Dorsolateral prefrontal cortex (tissue), 120 donors: ENCODE measurements at regions of chr18 and their contacts with region 1.

Region 1: DNA sequence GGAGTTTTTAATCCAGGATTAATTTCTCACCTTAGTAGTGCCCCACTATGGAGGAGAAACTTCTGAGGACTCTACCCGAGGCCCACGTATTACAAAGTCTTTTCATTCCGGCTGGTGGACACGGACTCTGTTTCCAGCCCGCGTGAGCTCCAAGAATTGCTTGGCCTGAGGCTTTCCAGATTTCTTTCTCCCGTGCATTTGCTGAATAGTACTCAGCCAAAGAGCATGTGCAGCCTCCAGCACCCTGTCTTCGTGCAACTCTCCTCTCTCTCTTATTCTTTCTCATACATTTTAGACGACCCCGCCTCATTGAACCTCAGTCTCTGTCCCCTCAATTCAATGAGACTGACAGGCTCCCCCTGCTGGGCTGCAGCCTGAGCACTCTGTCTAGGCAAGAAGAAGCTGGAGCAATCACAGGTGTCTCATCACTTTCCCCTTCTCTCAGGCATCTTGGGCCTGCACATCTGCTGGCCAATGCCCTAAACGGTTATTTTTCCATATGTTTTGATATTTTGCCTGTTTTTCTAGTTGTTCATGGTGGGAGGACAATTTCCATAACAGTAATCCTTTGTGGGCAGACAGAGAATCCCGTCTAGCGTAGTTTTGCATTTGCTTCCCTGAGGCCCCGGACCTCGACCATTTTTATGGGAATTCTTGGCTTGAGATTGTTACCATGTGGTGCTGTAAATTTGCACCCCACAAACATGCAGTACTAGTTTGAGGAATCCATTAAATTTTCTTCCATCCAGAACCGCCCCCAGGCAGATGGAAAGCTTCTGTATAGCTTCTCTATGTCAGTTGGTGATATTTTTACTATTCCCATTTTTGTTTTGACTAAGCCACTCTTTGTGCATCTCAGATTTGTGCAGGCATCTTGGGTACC is 50.1 kb upstream of the LPIN2 start:
- DNase-seq: peak; percentile 39 to 74 (median 68)
- H3K4me3 ChIP-seq: peak overlapping the region in 42 of 59 donors; percentile 1 to 55 (median 35)
- H3K27ac ChIP-seq: peak overlapping the region in 6 of 59 donors; percentile 0 to 39 (median 15)
- H3K27me3 ChIP-seq: no peaks in the 10 kb centered on the region
- CTCF ChIP-seq: peak in 55 of 56 donors; percentile 42 to 85 (median 76)

Region 2: DNA sequence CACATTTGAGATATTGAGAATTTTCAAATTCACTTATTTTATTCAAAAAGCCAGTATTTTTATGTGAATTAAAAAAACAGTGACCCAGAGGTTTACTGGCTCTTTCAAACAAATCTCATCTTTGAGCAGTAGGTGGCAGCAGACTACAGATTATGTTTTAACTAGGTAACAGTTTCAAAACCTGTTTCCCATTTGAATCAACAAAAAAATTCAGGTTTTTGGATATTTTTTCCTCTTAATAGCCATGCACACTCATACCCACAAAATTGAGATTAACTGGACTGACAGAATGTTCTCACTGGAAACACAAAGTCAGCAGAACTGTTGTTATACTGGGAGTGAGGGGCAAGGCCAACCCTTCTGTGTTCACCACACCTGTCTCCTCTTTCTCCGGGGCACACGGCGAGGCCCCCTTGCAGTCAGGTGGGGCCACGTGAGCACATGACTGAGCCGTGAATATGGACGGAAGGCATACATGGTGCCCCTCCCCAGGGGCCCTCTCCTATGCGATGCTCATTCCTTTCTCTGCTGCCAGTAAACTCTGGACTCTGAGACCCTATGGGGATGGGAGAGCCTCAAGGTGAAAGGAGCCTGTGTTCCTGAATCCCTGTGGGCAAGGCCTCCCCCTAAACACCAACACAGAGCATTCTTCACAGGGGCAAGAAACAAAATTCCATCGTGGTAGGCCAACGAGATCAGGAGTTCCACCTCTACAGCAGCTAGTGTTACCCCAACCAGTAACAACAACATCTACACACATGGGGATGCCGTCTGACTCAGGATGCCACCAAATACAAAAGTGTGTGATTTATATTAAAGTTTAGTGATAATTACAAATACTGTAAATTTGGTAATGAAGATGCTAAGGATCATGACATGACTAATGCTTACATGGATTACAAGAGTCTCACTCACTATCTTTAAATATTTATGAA is 130.5 kb before region 1 on chr18:
- intact Hi-C with region 1: loop called in 1 of 2 experiments (anchors 2 kb)
- DNase-seq: peak in 1 of 10 donors; percentile 39
- H3K4me3 ChIP-seq: no peak overlapping the region
- H3K27ac ChIP-seq: peak overlapping the region in 2 of 59 donors; percentile 7 to 41
- H3K27me3 ChIP-seq: no peaks in the 10 kb centered on the region
- CTCF ChIP-seq: peak; percentile 72 to 94 (median 84)

Region 3: DNA sequence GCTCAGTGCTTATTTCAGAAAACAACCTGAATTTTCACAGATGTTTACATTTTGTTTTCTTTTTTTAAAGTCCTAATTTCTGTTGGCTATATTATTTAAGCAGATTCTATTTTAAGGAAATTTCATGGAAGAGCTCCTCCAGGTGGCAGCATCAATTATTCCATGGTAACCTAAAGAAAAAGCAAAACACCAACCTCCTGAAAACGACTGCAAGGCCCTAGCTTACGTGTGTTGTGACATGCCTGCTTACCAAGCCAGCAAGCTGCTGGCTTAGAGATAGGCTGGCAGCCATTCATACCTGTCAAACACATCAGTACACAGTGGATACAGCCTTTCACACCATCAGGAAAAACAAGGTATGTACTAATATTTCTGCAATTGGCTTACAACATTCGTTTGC is 115.0 kb before region 1 on chr18:
- intact Hi-C with region 1: loop called in 1 of 2 experiments (anchors 5 kb)
- DNase-seq: no peak
- H3K4me3 ChIP-seq: no peak overlapping the region
- H3K27ac ChIP-seq: no peak overlapping the region
- H3K27me3 ChIP-seq: no peaks in the 10 kb centered on the region
- CTCF ChIP-seq: peak in 52 of 56 donors; percentile 12 to 67 (median 38)

Region 4: GRCh38 chr18:3129053-3129864 is 66.2 kb after region 1 on chr18:
- intact Hi-C with region 1: loop called in 1 of 2 experiments (anchors 5 kb)
- DNase-seq: peak; percentile 48 to 95 (median 85)
- H3K4me3 ChIP-seq: peak overlapping the region in 34 of 59 donors; percentile 2 to 55 (median 34)
- H3K27ac ChIP-seq: peak overlapping the region in 51 of 59 donors; percentile 7 to 90 (median 71)
- H3K27me3 ChIP-seq: no peaks in the 10 kb centered on the region
- CTCF ChIP-seq: peak; percentile 36 to 93 (median 78)